ENCODE measurements at regions of chr5 and their contacts with region 1.

Region 1: DNA sequence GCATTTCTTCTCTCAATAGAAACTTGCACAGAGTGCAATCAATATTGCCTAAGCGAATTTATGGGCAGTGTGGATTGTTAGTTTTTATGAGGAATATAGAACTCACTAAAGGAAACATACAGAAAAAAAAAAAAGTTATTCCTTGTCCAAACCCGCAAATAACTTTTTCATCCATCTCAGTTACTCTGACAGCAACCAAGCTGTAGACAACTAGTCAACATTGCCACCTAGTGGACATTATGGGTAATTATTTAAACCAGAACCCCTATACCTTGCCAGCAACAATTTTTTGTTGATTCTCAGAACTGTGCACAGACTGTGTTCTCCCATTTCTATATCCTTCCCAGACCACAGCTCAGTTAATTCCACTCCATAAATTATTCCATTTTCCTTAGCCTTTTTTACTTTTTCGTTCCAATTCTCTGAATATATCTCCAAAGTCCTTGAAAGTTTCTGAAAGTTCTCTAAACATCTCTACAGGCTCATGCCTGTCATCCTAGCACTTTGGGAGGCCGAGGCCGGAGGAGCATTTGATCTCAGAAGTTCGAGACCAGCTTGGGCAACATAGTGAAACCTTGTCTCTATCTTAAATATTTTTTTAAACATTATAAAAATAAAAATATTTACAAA is 2.6 kb upstream of the AFAP1L1 start:
- DNase-seq: peak in 1 of 2 experiments; percentile 72
- H3K4me3 ChIP-seq: no peak overlapping the region
- H3K27ac ChIP-seq: no peak overlapping the region
- H3K4me1 ChIP-seq: peaks cover 13% of the 10 kb centered on the region
- H3K27me3 ChIP-seq: no peaks in the 10 kb centered on the region
- CTCF ChIP-seq: peak; percentile 91

Region 2: DNA sequence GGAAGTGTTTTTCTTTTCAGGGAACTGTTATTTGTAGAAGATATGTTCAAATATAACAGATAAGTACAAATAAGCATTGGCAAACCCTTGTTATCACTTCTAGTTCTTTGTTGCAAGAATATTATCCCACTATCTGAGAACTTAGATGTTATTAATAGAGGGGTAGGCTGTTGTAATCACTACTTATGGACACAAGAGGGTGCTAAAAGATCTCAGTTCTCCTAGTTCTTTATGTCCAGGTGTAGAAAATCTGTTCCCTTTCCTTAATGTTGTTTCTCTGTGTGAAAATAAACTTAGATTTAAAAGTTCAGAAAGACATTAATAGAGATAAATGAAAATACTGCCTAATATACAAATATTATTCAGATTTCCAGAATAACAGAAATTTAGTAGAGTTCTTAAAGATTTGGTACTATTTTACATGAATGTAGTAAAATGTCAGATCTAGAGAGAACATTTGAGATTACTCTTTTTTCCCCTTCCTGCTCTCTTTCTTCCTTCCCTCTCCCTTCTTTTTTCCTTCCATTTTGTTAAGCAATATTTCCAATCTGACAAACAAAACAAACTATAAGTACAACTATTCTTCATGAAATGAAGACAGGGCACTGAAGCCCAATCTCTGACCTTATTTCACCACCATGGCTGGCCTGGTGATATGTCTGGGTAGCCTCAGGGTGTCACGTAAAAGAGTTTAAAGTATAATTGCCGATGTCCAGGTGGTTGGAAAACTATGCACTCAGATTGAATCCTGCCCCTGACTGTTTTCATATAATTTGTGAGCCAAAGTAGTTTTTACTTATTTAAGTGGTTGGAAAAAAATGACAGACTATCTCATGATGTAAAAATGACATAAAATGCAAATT is 1319.1 kb before region 1 on chr5:
- CTCF ChIA-PET with region 1: no interaction called
- POLR2A ChIA-PET with region 1: no interaction called
- intact Hi-C with region 1: loop called (anchors 10 kb)
- DNase-seq: peak in 1 of 2 experiments; percentile 42
- H3K4me3 ChIP-seq: no peak overlapping the region
- H3K27ac ChIP-seq: no peak overlapping the region
- H3K4me1 ChIP-seq: no peaks in the 10 kb centered on the region
- H3K27me3 ChIP-seq: no peaks in the 10 kb centered on the region
- CTCF ChIP-seq: peak; percentile 83

Region 3: DNA sequence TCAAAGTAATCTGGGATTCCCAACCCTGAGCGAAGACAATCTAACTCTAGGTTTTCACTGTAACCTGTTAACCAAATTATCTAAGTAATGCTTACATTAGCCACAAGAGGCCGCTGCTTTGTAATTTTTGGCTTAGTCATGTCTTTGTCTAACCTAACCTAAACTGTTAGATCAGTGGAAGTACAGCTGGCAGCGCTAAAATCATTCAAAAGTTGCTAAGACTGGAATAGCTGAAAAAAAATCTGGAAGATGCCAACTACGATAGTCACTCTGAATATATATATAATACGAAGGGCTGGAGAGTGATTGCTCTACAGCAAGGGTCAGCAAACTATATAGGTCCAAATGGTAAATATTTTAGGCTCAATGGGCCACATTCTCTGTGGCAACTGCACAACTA is 825.0 kb before region 1 on chr5:
- CTCF ChIA-PET with region 1: no interaction called
- POLR2A ChIA-PET with region 1: no interaction called
- intact Hi-C with region 1: loop called (anchors 5 kb)
- DNase-seq: peak; percentile 39 to 65
- H3K4me3 ChIP-seq: no peak overlapping the region
- H3K27ac ChIP-seq: no peak overlapping the region
- H3K4me1 ChIP-seq: no peaks in the 10 kb centered on the region
- H3K27me3 ChIP-seq: no peaks in the 10 kb centered on the region
- CTCF ChIP-seq: peak; percentile 89

Region 4: DNA sequence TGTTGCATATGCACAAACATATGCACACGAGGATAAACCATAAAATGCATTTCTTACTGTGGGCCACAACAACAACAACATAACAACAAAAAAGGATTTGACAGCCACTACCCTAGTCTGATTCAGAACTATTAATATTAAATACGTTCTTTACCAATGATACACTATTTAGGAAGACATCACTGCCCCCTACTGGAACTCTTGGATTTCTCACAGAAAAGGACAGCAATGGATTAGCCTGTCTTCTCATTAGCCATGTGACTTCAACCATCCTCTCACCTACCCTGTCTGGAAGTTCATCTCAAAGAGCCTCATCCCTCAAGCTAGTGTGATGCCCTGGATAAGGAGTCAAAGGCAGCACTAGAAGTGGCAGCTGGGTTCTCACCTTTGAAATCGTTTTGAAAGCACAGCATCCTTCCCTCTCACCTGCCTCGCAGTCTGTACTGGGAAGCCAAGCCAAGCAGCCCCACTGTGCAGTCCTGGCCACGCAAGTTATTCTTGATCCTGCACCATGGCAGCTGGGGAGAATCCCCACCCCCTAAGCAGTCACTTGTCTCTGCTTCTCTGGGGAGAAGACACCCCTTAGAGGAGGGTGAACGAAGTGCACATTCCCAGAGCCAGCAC is 270.8 kb before region 1 on chr5:
- CTCF ChIA-PET with region 1: interaction called, 4 read pairs
- POLR2A ChIA-PET with region 1: no interaction called
- intact Hi-C with region 1: loop called (anchors 1 kb)
- DNase-seq: peak; percentile 46 to 54
- H3K4me3 ChIP-seq: no peak overlapping the region
- H3K27ac ChIP-seq: no peak overlapping the region
- H3K4me1 ChIP-seq: peaks cover 46% of the 10 kb centered on the region
- H3K27me3 ChIP-seq: no peaks in the 10 kb centered on the region
- CTCF ChIP-seq: peak; percentile 85

Region 5: DNA sequence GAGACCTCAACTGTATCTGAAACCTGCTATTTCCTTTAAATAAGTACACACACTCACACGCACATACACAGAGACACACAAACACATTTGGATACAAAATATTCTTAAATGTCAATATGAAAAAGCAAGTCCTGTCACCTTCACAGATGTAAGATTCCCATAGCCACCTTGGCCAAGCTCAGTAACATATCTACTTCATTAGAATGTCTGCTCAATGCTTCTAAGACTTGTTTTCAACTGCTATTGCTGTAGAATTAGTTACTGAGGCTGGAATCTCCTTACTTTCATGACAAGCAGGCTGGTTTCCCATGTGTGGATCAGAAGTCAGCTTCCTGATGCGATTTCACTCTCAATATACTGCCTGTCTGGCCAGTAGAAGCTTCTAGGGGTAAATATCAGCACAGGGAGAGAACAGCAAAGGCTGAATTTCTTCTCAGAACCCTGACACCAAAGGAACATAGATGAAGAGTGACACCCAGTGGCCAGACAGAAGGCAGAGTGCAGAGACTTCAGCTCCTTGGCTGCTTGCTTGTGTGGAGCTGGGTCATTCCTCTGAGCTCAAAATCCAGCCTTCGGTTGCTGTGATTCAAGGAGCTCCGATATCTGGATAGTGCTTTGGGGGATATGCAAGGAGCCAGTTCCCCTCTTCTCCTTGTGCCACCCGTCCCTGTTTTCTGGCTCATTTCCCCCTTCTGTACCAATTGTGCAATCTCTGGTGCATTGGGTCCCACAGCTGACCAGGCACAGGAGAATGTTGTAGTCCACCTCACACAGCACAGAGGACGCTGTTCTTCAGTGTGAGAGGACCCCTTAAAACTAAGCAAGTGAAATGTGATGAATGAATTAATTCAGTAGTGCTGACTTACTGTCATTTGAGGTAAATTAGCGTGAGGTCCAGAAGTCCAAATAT is 154.4 kb before region 1 on chr5:
- CTCF ChIA-PET with region 1: interaction called, 14 read pairs
- POLR2A ChIA-PET with region 1: no interaction called
- intact Hi-C with region 1: no loop called
- DNase-seq: peak; percentile 74 to 82
- H3K4me3 ChIP-seq: peak overlapping the region; percentile 22; the same call in 1 of the 2 replicates
- H3K27ac ChIP-seq: peak overlapping the region; percentile 92
- H3K4me1 ChIP-seq: peaks cover 66% of the 10 kb centered on the region
- H3K27me3 ChIP-seq: no peaks in the 10 kb centered on the region
- CTCF ChIP-seq: peak; percentile 90

Region 6: DNA sequence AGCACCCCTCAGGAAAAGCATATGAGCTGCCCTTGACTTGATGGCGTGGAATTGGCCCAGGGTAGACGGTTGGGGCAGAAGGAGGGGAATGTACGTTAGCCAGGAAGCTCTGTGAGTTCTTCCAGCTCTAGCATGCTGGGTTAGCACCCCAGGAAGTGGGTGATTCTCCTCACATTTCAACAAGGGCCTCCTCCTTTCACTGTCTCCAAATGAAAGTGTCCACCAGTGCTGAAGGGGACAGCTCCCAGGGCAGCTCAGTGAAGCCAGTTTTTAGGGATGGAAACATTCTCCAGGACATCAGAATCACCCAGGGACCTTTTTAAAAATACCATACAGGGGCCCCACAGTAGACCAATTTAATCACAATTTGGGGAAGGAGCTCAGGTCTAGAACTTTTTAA is 14.5 kb before region 1 on chr5:
- CTCF ChIA-PET with region 1: no interaction called
- POLR2A ChIA-PET with region 1: no interaction called
- intact Hi-C with region 1: no loop called
- DNase-seq: no peak
- H3K4me3 ChIP-seq: no peak overlapping the region
- H3K27ac ChIP-seq: no peak overlapping the region
- H3K4me1 ChIP-seq: no peaks in the 10 kb centered on the region
- H3K27me3 ChIP-seq: no peaks in the 10 kb centered on the region
- CTCF ChIP-seq: no peak

Region 7: GRCh38 chr5:149345147-149345875 is 76.3 kb after region 1 on chr5 and contains the start of gene GRPEL2:
- CTCF ChIA-PET with region 1: no interaction called
- POLR2A ChIA-PET with region 1: no interaction called
- intact Hi-C with region 1: loop called (anchors 2 kb)
- DNase-seq: peak; percentile 92 to 95
- H3K4me3 ChIP-seq: peak within 1 kb of the TSS; percentile 95
- H3K27ac ChIP-seq: peak within 1 kb of the TSS; percentile 80
- H3K4me1 ChIP-seq: peaks cover 16% of the 10 kb centered on the region
- H3K27me3 ChIP-seq: no peaks in the 10 kb centered on the region
- CTCF ChIP-seq: no peak
- total RNA-seq, gene GRPEL2: 32.4 and 36.9 TPM in 2 replicates

Region 8: DNA sequence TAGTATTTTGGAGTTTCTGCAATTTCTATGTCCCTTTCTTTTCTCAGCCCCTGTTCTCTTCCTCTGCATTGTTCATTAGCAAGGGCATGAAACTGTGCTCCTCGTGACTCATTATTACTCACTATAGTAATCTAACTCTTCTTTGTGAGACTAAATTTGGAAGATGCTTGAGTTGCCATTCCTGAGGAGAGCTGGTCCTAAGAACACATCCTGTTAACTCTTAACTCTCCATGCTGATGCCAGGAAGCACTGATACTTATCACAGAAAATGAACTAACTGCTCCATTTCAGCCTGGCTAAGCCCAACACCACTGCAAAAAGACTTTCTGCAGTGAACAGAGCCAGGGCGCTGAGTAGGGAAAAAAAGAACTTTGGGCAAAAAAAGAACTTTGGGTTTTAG is 292.8 kb after region 1 on chr5:
- CTCF ChIA-PET with region 1: no interaction called
- POLR2A ChIA-PET with region 1: no interaction called
- intact Hi-C with region 1: loop called (anchors 2 kb)
- DNase-seq: peak; percentile 48 to 95
- H3K4me3 ChIP-seq: peak overlapping the region; percentile 43; the same call in 1 of the 2 replicates
- H3K27ac ChIP-seq: peak overlapping the region; percentile 97
- H3K4me1 ChIP-seq: peaks cover 53% of the 10 kb centered on the region
- H3K27me3 ChIP-seq: no peaks in the 10 kb centered on the region
- CTCF ChIP-seq: no peak

Measured in PC-9 (cell line).